Colonic mucosa (tissue), 4 donors: ENCODE measurements at regions of chr17 and their contacts with region 1.

Region 1: DNA sequence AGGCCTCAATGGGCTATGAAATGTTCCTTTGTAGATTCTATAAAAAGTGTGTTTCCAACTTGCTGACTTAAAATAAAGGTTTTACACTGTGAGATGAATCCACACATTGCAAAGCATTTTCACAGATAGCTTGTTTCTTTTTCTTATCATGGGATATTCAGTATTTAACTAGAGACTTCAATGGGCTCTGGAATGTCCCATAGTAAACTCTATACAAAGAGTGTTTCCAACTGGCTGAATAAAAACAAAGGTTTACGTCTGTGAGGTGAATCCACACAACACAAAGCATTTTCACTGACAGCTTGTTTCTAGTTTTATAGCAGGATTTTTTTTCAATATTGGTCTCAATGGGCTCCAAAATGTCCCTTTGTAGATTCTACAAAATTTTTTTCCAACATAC is 550.1 kb downstream of the KCNJ18 start:
- DNase-seq: no peak
- H3K4me3 ChIP-seq: no peak overlapping the region
- H3K27ac ChIP-seq: no peak overlapping the region
- H3K4me1 ChIP-seq: no peaks in the 10 kb centered on the region
- H3K27me3 ChIP-seq: no peaks in the 10 kb centered on the region
- CTCF ChIP-seq: no peak

Region 2: DNA sequence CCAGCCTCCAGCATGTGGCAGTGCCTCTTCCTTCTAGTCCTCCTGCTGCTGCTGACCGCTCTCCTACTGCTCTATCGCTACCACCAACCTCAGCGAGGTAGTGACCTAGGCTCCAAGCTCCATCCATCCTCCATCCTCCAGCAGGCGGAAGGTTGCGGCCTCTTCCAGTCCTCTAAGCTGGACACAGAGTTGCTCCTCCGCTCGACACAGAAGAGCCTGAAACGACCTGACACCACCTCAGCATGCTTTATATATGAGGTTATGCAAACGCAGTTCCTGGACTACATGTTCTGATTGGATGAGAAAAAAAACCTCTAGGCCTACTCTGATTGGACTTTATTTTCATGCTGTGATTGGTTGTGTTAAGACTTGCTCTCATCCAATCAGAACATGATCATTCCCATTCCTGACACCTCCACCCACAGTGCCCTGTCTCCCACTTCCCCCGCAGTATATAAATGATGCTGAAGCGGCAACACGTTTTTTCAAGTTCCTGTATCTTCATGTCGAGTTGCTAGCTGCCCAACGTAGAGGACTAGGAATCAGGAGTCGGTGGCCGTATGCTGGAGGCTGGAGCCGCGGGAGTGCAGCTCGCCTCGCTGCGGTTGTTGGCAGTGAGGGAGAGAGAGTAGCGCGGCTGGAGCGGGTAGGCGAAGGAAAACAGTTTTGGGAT is 152.1 kb before region 1 on chr17:
- intact Hi-C with region 1: no loop called
- DNase-seq: no peak
- H3K4me3 ChIP-seq: no peak overlapping the region
- H3K27ac ChIP-seq: no peak overlapping the region
- H3K4me1 ChIP-seq: no peaks in the 10 kb centered on the region
- H3K27me3 ChIP-seq: no peaks in the 10 kb centered on the region
- CTCF ChIP-seq: no peak

Region 3: GRCh38 chr17:22193113-22193512 is 49.4 kb before region 1 on chr17:
- intact Hi-C with region 1: loop called (anchors 10 kb)
- DNase-seq: no peak
- H3K4me3 ChIP-seq: no peak overlapping the region
- H3K27ac ChIP-seq: no peak overlapping the region
- H3K4me1 ChIP-seq: no peaks in the 10 kb centered on the region
- H3K27me3 ChIP-seq: no peaks in the 10 kb centered on the region
- CTCF ChIP-seq: no peak

Region 4: DNA sequence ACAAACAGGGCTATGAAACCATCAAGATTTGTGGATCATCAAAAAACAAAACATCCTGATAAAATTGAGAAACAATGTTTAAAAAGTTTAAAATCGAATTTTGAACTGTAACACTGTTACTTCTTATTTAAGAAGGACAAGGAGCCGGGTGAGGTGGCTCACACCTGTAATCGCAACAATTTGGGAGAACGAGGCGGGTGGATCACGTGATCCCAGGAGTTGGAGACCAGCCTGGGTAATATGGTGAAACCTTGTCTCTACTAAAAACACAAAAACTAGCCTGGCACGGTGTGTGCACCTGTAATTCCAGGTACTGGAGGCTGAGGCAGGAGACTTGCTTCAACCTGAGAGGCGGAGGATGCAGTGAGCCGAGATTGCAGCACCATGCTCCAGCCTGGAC is 77.8 kb after region 1 on chr17:
- intact Hi-C with region 1: no loop called
- DNase-seq: no peak
- H3K4me3 ChIP-seq: no peak overlapping the region
- H3K27ac ChIP-seq: no peak overlapping the region
- H3K4me1 ChIP-seq: no peaks in the 10 kb centered on the region
- H3K27me3 ChIP-seq: no peaks in the 10 kb centered on the region
- CTCF ChIP-seq: no peak

Region 5: DNA sequence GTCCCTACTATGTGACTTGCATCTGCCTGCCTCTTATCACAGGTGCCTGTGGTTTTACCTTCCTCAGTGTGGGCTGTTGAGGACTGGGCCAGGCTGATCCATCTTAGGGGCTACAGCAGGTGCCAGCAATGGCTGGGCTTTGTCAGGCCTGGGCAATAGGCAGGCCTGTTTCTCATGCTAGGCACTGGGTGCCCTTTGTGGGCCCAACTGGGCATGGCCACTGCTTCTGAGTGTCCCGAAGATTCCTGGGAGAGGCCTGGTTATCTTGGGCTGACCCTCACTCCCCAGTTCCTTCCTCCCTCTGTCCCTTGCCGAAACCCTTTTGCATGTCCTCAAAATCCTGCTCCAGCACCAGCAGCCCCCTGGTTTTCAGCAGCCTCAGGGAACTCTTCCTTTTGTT is 474.7 kb after region 1 on chr17:
- intact Hi-C with region 1: no loop called
- DNase-seq: no peak
- H3K4me3 ChIP-seq: no peak overlapping the region
- H3K27ac ChIP-seq: no peak overlapping the region
- H3K4me1 ChIP-seq: no peaks in the 10 kb centered on the region
- H3K27me3 ChIP-seq: no peaks in the 10 kb centered on the region
- CTCF ChIP-seq: no peak